ENCODE measurements at regions of chr17 and their contacts with region 1.

Region 1: GRCh38 chr17:72657467-72658317 is 434.8 kb downstream of the SLC39A11 start:
- DNase-seq: no peak
- ATAC-seq: no peak

Region 2: DNA sequence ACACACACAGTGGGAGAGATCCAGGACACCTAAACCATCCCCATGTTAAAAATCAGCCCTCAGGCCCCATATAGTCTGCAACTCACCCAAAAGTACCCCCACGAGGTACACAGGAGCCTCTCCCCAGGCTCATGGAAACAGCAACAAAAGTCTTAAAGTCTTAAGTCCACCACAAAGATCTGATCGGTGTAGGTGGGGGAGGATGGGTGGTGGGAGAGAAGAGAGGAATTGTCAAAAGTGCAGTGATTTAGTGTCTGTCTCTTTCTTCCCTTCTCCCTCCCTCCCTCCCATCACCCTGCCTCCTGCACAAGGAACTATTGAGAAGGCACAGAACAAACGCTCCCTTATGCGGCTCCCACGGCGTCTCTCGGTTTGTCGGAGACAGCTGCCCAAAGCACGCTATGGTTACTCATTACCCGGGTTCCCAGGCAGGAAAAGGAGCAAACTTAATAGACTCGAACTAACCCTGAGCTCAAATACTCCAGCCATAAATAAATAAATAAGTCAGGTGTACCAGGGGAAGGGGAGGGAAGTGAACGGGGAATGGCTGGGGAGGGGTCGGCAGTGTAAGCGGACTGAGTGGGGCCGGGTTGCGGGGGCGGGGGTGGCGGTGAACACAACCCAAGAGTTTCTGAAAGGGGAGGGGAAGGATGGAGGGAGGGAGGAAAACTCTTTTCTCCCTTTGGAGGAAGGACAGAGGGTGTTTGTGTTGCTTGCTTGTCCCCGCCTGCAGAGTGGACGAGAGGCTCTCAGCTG is 42.6 kb before region 1 on chr17:
- intact Hi-C with region 1: no loop called
- DNase-seq: no peak
- ATAC-seq: no peak

Region 3: GRCh38 chr17:72715906-72716572 is 58.3 kb after region 1 on chr17:
- intact Hi-C with region 1: loop called (anchors 10 kb)
- DNase-seq: no peak
- ATAC-seq: no peak